ENCODE measurements at regions of chrX and their contacts with region 1.

Region 1: GRCh38 chrX:13750204-13750603 is 15.7 kb downstream of the OFD1 start:
- DNase-seq: no peak
- ATAC-seq: peak; percentile 77
- H3K4me3 ChIP-seq: no peak overlapping the region
- H3K27ac ChIP-seq: peak overlapping the region; percentile 57; the same call in 1 of the 2 replicates
- H3K4me1 ChIP-seq: peaks cover 36% of the 10 kb centered on the region
- H3K27me3 ChIP-seq: no peaks in the 10 kb centered on the region
- CTCF ChIP-seq: peak; percentile 65 to 74 (median 70)
- EP300 ChIP-seq: no peak
- POLR2A ChIP-seq: no peak
- RAD21 ChIP-seq: peak; percentile 72

Region 2: DNA sequence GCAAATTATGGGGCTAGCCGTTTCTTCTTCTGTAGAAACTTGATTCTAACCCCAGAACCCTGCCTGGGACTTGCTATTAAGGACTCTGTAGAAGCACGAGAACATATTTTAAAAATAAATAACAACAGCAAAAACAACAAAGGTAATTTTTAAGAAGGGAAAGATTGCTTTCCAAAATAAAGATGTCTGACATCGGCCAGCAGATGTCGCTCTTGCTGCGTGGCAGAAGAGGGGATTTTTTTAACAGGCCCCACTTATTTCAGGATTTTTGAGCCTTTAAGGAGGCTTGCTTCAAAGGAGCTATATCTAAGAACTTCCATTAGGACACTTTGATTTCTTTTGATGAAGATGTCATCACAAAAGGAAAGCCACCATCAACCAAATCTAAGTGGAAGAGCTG is 243.6 kb before region 1 on chrX:
- CTCF ChIA-PET with region 1: interaction called, 15 read pairs
- POLR2A ChIA-PET with region 1: no interaction called
- RAD21 ChIA-PET with region 1: no interaction called
- SMC1A ChIA-PET with region 1: interaction called, 3 read pairs
- in situ Hi-C with region 1: loop called (anchors 10 kb)
- intact Hi-C with region 1: loop called (anchors 5 kb)
- DNase-seq: no peak
- ATAC-seq: peak; percentile 32; the same call in 1 of the 3 replicates
- H3K4me3 ChIP-seq: no peak overlapping the region
- H3K27ac ChIP-seq: no peak overlapping the region
- H3K4me1 ChIP-seq: no peaks in the 10 kb centered on the region
- H3K27me3 ChIP-seq: no peaks in the 10 kb centered on the region
- CTCF ChIP-seq: peak; percentile 71 to 82 (median 74)
- EP300 ChIP-seq: no peak
- POLR2A ChIP-seq: no peak
- RAD21 ChIP-seq: peak; percentile 96

Region 3: DNA sequence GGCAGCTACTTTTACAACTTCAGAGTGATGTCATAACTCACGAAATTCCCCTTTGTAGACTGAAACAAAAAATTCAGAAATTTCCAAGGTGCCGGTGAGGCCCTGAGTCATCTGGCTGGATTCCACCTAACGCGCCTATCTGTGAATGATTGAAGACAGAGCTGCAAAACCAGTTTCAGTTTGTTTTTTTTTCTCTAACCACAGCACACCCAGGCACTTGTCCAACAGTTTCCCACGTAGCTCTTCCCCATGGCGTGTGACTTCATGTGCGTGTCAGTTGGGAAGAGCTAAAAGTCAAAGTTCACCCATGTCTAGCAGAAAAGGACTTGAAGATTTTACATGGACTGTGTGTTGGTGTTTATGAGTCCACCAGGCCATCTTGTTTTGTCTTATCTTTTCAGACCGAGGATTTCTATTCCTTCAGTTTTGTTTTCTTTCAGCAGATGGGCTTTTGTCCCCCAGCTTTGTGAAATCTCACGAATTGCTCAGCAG is 80.9 kb before region 1 on chrX:
- CTCF ChIA-PET with region 1: interaction called, 6 read pairs
- POLR2A ChIA-PET with region 1: interaction called, 12 read pairs
- RAD21 ChIA-PET with region 1: interaction called, 12 read pairs
- SMC1A ChIA-PET with region 1: interaction called, 18 read pairs
- in situ Hi-C with region 1: no loop called
- intact Hi-C with region 1: no loop called
- DNase-seq: peak; percentile 89
- ATAC-seq: peak; percentile 77
- H3K4me3 ChIP-seq: peak overlapping the region; percentile 44; the same call in 1 of the 2 replicates
- H3K27ac ChIP-seq: peak overlapping the region; percentile 92
- H3K4me1 ChIP-seq: peaks cover 37% of the 10 kb centered on the region
- H3K27me3 ChIP-seq: no peaks in the 10 kb centered on the region
- CTCF ChIP-seq: no peak
- EP300 ChIP-seq: peak; percentile 91 to 92
- POLR2A ChIP-seq: no peak
- RAD21 ChIP-seq: 0 out of 2 replicates have a peak, but pooled peaks have one; percentile 15

Region 4: GRCh38 chrX:13734278-13735172 is 15.7 kb before region 1 on chrX and contains the starts of genes OFD1 and TRAPPC2:
- CTCF ChIA-PET with region 1: interaction called, 113 read pairs
- POLR2A ChIA-PET with region 1: interaction called, 8 read pairs
- RAD21 ChIA-PET with region 1: interaction called, 30 read pairs
- SMC1A ChIA-PET with region 1: interaction called, 89 read pairs
- in situ Hi-C with region 1: no loop called
- intact Hi-C with region 1: no loop called
- DNase-seq: peak; percentile 96
- ATAC-seq: peak; percentile 92
- H3K4me3 ChIP-seq: peak within 1 kb of the TSS; percentile 78
- H3K27ac ChIP-seq: peak within 1 kb of the TSS; percentile 87
- H3K4me1 ChIP-seq: no peaks in the 10 kb centered on the region
- H3K27me3 ChIP-seq: no peaks in the 10 kb centered on the region
- CTCF ChIP-seq: no peak
- EP300 ChIP-seq: 0 out of 4 replicates have a peak, but pooled peaks of 1 of the 2 experiments have one; percentile 24
- POLR2A ChIP-seq: peak; percentile 87
- RAD21 ChIP-seq: no peak
- polyA plus RNA-seq, gene OFD1: 43.0 to 64.5 TPM
- polyA plus RNA-seq, gene TRAPPC2: 18.3 to 27.5 TPM

Region 5: GRCh38 chrX:13805241-13805640 is 55.0 kb after region 1 on chrX:
- CTCF ChIA-PET with region 1: interaction called, 3 read pairs
- POLR2A ChIA-PET with region 1: no interaction called
- RAD21 ChIA-PET with region 1: interaction called, 3 read pairs
- SMC1A ChIA-PET with region 1: interaction called, 6 read pairs
- in situ Hi-C with region 1: no loop called
- intact Hi-C with region 1: loop called (anchors 2 kb)
- DNase-seq: no peak
- ATAC-seq: peak; percentile 48; the same call in 2 of the 3 replicates
- H3K4me3 ChIP-seq: no peak overlapping the region
- H3K27ac ChIP-seq: no peak overlapping the region
- H3K4me1 ChIP-seq: no peaks in the 10 kb centered on the region
- H3K27me3 ChIP-seq: 0 out of 4 replicates have a peak, but pooled peaks cover 0 to 6% of the 10 kb centered on the region in 2 experiments
- CTCF ChIP-seq: peak in 2 of 3 experiments; percentile 16 to 31; a peak in 2 of 6 replicates
- EP300 ChIP-seq: no peak
- POLR2A ChIP-seq: no peak
- RAD21 ChIP-seq: peak; percentile 29; the same call in 1 of the 2 replicates

Region 6: GRCh38 chrX:14029425-14030173 is 279.4 kb after region 1 on chrX and contains the start of gene GEMIN8:
- CTCF ChIA-PET with region 1: interaction called, 29 read pairs
- POLR2A ChIA-PET with region 1: no interaction called
- RAD21 ChIA-PET with region 1: interaction called, 28 read pairs
- SMC1A ChIA-PET with region 1: interaction called, 35 read pairs
- in situ Hi-C with region 1: loop called (anchors 5 kb)
- intact Hi-C with region 1: loop called (anchors 1 kb)
- DNase-seq: peak; percentile 46
- ATAC-seq: peak; percentile 84
- H3K4me3 ChIP-seq: peak within 1 kb of the TSS; percentile 81
- H3K27ac ChIP-seq: peak within 1 kb of the TSS; percentile 77
- H3K4me1 ChIP-seq: peaks cover 6% of the 10 kb centered on the region
- H3K27me3 ChIP-seq: no peaks in the 10 kb centered on the region
- CTCF ChIP-seq: no peak
- EP300 ChIP-seq: 0 out of 4 replicates have a peak, but pooled peaks of 1 of the 2 experiments have one; percentile 4
- POLR2A ChIP-seq: peak; percentile 91
- RAD21 ChIP-seq: no peak
- polyA plus RNA-seq, gene GEMIN8: 18.4 to 29.5 TPM

Region 7: GRCh38 chrX:15493118-15493962 is 1743.1 kb after region 1 on chrX and contains the start of gene PIR:
- CTCF ChIA-PET with region 1: no interaction called
- POLR2A ChIA-PET with region 1: no interaction called
- RAD21 ChIA-PET with region 1: no interaction called
- SMC1A ChIA-PET with region 1: no interaction called
- in situ Hi-C with region 1: no loop called
- intact Hi-C with region 1: no loop called
- DNase-seq: peak; percentile 17
- ATAC-seq: peak; percentile 97
- H3K4me3 ChIP-seq: peak within 1 kb of the TSS; percentile 48
- H3K27ac ChIP-seq: peak within 1 kb of the TSS; percentile 52
- H3K4me1 ChIP-seq: no peaks in the 10 kb centered on the region
- H3K27me3 ChIP-seq: no peaks in the 10 kb centered on the region
- CTCF ChIP-seq: peak; percentile 31 to 41 (median 38); a peak in 4 of 6 replicates
- EP300 ChIP-seq: no peak
- POLR2A ChIP-seq: peak; percentile 68
- RAD21 ChIP-seq: no peak
- polyA plus RNA-seq, gene PIR: 10.4 to 10.9 TPM